ENCODE measurements at regions of chr16 and their contacts with region 1.

Region 1: DNA sequence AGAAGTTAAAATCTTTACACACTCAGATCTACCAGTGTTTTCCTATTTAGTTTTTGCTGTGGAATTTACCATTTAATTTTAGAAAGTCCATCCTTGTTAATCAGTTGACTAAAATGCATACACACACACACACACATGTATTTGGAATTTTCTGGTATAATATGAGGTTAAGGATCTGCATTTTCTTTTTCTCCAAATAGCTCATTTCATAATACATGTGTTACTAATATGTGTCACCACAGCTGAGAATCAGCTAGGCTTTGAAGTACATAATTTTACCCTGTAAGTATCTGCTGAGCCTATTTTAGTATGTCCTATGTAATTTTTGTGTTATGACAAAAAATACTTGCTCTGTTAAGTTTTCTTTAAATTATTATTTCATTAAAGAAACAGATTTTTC is 143.2 kb downstream of the PHKB start:
- DNase-seq: no peak
- H3K4me3 ChIP-seq: no peak overlapping the region
- H3K27ac ChIP-seq: no peak overlapping the region
- H3K4me1 ChIP-seq: no peaks in the 10 kb centered on the region
- CTCF ChIP-seq: no peak

Region 2: GRCh38 chr16:47533744-47534292 is 70.5 kb before region 1 on chr16:
- CTCF ChIA-PET with region 1: no interaction called
- POLR2A ChIA-PET with region 1: no interaction called
- intact Hi-C with region 1: no loop called
- DNase-seq: no peak
- H3K4me3 ChIP-seq: no peak overlapping the region
- H3K27ac ChIP-seq: no peak overlapping the region
- H3K4me1 ChIP-seq: no peaks in the 10 kb centered on the region
- CTCF ChIP-seq: no peak

Region 3: GRCh38 chr16:47622451-47623176 is 18.3 kb after region 1 on chr16:
- CTCF ChIA-PET with region 1: no interaction called
- POLR2A ChIA-PET with region 1: interaction called, 10 read pairs
- intact Hi-C with region 1: no loop called
- DNase-seq: no peak
- H3K4me3 ChIP-seq: no peak overlapping the region
- H3K27ac ChIP-seq: no peak overlapping the region
- H3K4me1 ChIP-seq: no peaks in the 10 kb centered on the region
- CTCF ChIP-seq: no peak

Measured in OCI-LY7 (cell line).